Gastrocnemius medialis (tissue), 4 donors: ENCODE measurements at regions of chr18 and their contacts with region 1.

Region 1: DNA sequence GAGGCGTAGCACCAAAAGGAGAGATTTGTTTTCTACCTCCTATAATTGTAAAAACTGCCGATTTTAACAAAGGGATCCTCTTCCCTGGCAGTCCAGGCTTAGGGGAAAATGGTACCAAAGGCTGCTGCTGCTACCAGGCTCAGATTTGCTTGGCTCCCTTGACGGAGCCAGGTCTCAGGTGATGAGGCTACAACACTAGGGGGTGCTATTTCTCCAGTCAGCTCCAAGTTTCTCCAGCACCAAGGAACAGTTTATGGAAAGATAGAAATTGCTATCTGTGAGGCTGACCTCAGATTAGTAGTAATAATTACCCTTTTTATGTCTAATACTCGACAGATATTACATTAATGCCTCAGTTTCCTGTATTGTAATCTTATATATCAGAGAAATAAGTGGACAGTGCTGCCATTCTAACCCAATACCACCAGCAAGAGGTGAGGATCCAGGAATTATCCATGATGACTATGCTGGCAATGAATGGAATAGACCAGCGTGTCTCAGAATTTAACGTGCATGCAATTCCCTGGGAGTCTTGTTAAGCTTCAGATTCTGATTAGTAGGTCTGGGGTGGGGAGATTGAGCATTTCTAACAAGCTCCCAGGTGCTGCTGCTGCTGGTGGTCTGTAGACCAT is 111.3 kb downstream of the ESCO1 start:
- DNase-seq: peak in 1 of 2 donors; percentile 58
- ATAC-seq: peak; percentile 55 to 76
- H3K4me3 ChIP-seq: no peak overlapping the region
- H3K27ac ChIP-seq: peak overlapping the region in 3 of 4 donors; percentile 42 to 83 (median 57)
- H3K4me1 ChIP-seq: peaks cover 15 to 25% of the 10 kb centered on the region in 2 donors
- H3K27me3 ChIP-seq: no peaks in the 10 kb centered on the region
- CTCF ChIP-seq: peak; percentile 50 to 76 (median 68)
- POLR2A ChIP-seq: no peak

Region 2: GRCh38 chr18:21820035-21820810 is 331.0 kb after region 1 on chr18:
- in situ Hi-C with region 1: loop called in 1 of 4 experiments (anchors 25 kb)
- intact Hi-C with region 1: no loop called
- DNase-seq: no peak
- ATAC-seq: peak; percentile 46 to 53
- H3K4me3 ChIP-seq: no peak overlapping the region
- H3K27ac ChIP-seq: peak overlapping the region; percentile 12 to 89 (median 76)
- H3K4me1 ChIP-seq: peaks cover 0 to 2% of the 10 kb centered on the region in 2 donors
- H3K27me3 ChIP-seq: no peaks in the 10 kb centered on the region
- CTCF ChIP-seq: peak; percentile 54 to 84 (median 65)
- POLR2A ChIP-seq: no peak

Region 3: DNA sequence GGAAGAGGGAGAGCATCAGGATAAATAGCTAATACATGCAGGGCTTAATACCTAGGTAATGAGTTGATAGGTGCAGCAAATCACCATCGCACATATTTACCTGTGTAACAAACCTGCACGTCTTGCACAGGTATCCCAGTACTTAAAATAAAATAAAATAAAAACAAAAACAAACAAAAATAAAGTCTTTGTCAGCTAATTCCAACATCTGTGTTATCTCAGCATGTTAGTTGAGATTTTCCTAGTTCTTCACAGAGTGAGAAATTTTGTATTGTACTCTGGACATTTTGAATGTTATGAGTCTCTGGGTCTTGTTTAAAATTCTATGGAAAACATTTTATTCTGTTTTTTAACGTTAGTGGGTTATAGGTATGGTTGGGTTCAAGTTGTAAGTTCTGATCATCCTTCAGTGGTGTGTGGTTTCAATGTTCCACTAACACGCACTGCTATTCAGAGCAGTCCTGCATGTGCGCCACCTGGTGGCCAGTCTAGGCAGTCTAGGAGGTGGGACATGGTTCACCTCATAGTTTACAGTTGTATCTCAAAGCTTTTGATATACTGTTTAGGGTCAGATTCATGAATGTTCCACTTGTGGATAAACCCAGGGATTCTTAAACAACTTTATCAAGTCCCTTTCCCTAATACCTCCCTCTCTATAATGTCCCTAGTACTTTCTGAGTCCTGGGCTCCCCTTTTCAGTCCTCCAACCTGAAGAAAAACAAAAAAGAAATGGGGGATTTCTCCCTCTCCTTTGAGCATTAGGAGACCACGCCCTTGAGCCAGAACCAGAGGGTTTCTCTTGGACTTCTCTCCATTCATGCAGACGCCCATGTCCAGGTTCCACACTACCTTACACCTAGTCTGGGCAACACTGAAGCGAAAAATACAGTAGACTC is 466.8 kb after region 1 on chr18:
- in situ Hi-C with region 1: loop called in 1 of 4 experiments (anchors 25 kb)
- intact Hi-C with region 1: loop called (anchors 5 kb)
- DNase-seq: peak; percentile 25 to 36
- ATAC-seq: peak; percentile 66 to 75
- H3K4me3 ChIP-seq: no peak overlapping the region
- H3K27ac ChIP-seq: no peak overlapping the region
- H3K4me1 ChIP-seq: no peaks in the 10 kb centered on the region
- H3K27me3 ChIP-seq: no peaks in the 10 kb centered on the region
- CTCF ChIP-seq: peak; percentile 53 to 88 (median 60)
- POLR2A ChIP-seq: no peak